ENCODE measurements at regions of chr1 and their contacts with region 1.

Region 1: GRCh38 chr1:171245458-171246064 is 2.7 kb upstream of the FMO1 start:
- DNase-seq: peak; percentile 37
- H3K4me3 ChIP-seq: no peak overlapping the region
- H3K27ac ChIP-seq: no peak overlapping the region
- H3K4me1 ChIP-seq: no peaks in the 10 kb centered on the region
- H3K27me3 ChIP-seq: peaks cover 29% of the 10 kb centered on the region; the same call in 1 of the 2 replicates
- CTCF ChIP-seq: peak; percentile 80
- EP300 ChIP-seq: no peak
- RAD21 ChIP-seq: peak; percentile 48

Region 2: GRCh38 chr1:171226747-171227370 is 18.7 kb before region 1 on chr1:
- CTCF ChIA-PET with region 1: interaction called, 14 read pairs
- POLR2A ChIA-PET with region 1: no interaction called
- DNase-seq: peak; percentile 26
- H3K4me3 ChIP-seq: no peak overlapping the region; a peak in 1 of 4 replicates
- H3K27ac ChIP-seq: no peak overlapping the region
- H3K4me1 ChIP-seq: peaks cover 0 to 13% of the 10 kb centered on the region in 2 experiments; a peak in 1 of 4 replicates
- H3K27me3 ChIP-seq: peaks cover 6% of the 10 kb centered on the region; the same call in 1 of the 2 replicates
- CTCF ChIP-seq: peak; percentile 84
- EP300 ChIP-seq: no peak
- RAD21 ChIP-seq: peak; percentile 69

Region 3: GRCh38 chr1:171256940-171257606 is 11.5 kb after region 1 on chr1:
- CTCF ChIA-PET with region 1: interaction called, 22 read pairs
- POLR2A ChIA-PET with region 1: no interaction called
- DNase-seq: peak; percentile 49
- H3K4me3 ChIP-seq: no peak overlapping the region
- H3K27ac ChIP-seq: no peak overlapping the region
- H3K4me1 ChIP-seq: peaks cover 0 to 6% of the 10 kb centered on the region in 2 experiments; a peak in 2 of 4 replicates
- H3K27me3 ChIP-seq: peaks cover 67% of the 10 kb centered on the region; the same call in 1 of the 2 replicates
- CTCF ChIP-seq: no peak
- EP300 ChIP-seq: no peak
- RAD21 ChIP-seq: no peak